ENCODE measurements at regions of chr2 and their contacts with region 1.

Region 1: GRCh38 chr2:42663106-42663780 is 94.8 kb downstream of the MTA3 start:
- DNase-seq: peak; percentile 32 to 64
- H3K4me3 ChIP-seq: no peak overlapping the region
- H3K27ac ChIP-seq: no peak overlapping the region
- H3K4me1 ChIP-seq: no peaks in the 10 kb centered on the region
- H3K27me3 ChIP-seq: no peaks in the 10 kb centered on the region
- CTCF ChIP-seq: peak; percentile 77 to 95 (median 92)
- POLR2A ChIP-seq: no peak

Region 2: DNA sequence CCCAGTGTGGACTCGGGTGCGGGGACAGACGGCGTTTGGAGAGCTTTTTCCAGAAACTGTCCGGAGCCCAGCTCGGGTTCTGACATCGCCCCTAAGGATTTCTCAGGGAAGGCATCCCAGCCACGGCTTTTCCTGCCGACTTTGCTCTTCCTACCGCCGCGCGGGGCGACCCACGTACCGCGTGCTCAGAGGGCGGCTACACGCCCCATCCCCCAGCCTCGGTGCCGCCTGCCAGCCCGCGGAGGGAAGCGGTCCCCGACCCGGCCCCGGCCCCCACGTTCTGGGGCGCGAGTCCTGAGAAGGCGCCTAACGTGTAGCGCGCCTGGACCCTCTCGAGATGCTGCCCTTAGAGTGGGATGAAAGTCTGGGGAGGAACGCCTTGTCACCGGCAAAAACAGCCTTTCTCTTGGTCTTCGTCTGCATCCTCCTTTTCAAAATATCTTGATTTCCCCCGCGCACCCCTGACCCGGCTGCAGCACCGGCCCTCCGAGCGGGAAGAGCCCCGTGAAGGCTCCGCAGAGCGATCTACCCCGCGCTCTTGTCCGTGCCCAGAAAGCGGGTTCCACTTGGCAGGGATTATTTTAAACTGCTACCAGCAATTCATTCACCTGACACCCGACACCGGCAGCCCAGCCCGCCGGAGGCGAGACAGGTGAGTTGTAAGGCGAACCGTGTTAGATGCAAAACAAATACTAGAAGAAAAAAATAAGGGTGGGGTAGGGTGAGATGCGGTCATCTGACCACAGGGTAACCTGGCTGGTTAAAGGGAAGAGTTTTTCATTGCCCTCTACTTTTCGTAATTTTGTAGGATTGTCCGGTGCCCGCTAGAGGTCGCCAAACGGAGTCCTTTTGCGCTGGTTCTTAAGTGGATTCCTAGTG is 168.6 kb before region 1 on chr2:
- intact Hi-C with region 1: loop called (anchors 5 kb)
- DNase-seq: peak; percentile 50 to 70
- H3K4me3 ChIP-seq: peak overlapping the region; percentile 45 to 78 (median 67)
- H3K27ac ChIP-seq: peak overlapping the region in 1 of 2 donors; percentile 36
- H3K4me1 ChIP-seq: peaks cover 0 to 5% of the 10 kb centered on the region in 2 donors
- H3K27me3 ChIP-seq: peaks cover 4 to 5% of the 10 kb centered on the region in 2 donors
- CTCF ChIP-seq: peak; percentile 65 to 74 (median 74)
- POLR2A ChIP-seq: no peak